ENCODE measurements at regions of chr12 and their contacts with region 1.

Region 1: GRCh38 chr12:53344824-53345485 is 8.8 kb upstream of the SP7 start:
- DNase-seq: peak; percentile 84
- CTCF ChIP-seq: peak; percentile 76

Region 2: GRCh38 chr12:53268648-53269562 is 76.0 kb before region 1 on chr12:
- CTCF ChIA-PET with region 1: no interaction called
- POLR2A ChIA-PET with region 1: no interaction called
- DNase-seq: no peak
- CTCF ChIP-seq: no peak

Region 3: DNA sequence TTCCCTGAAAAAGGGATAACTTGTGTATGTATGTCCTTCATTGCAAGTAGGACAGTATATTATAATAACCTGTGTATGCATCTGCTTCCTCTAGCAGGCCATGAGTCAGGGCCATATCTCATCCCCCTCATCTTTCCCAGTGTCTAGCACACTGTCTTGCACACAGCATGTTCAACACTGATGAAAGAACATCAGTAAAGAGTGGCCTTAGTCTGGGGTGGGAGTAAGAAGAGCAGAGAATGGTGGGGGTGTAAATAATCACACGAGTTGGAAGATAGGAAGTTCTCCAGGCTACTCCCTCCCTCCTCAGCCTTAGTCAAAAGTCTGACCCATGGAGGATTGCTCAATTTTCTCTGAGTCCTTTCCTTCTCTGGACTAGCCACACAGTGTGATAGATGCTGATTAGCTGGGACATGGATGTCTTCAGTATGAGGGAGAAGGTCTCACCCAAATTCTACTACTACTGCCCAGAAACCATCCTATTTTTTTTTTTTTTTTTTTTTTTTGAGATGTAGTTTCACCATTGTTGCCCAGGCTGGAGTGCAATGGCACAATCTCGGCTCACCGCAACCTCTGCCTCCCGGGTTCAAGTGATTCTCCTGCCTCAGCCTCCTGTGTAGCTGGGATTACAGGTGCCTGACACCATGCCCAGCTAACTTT is 20.4 kb after region 1 on chr12:
- CTCF ChIA-PET with region 1: interaction called, 10 read pairs
- POLR2A ChIA-PET with region 1: no interaction called
- DNase-seq: no peak
- CTCF ChIP-seq: no peak

Region 4: GRCh38 chr12:53379389-53380103 is 34.6 kb after region 1 on chr12:
- CTCF ChIA-PET with region 1: interaction called, 15 read pairs
- POLR2A ChIA-PET with region 1: interaction called, 3 read pairs
- DNase-seq: peak; percentile 88
- CTCF ChIP-seq: no peak

Region 5: DNA sequence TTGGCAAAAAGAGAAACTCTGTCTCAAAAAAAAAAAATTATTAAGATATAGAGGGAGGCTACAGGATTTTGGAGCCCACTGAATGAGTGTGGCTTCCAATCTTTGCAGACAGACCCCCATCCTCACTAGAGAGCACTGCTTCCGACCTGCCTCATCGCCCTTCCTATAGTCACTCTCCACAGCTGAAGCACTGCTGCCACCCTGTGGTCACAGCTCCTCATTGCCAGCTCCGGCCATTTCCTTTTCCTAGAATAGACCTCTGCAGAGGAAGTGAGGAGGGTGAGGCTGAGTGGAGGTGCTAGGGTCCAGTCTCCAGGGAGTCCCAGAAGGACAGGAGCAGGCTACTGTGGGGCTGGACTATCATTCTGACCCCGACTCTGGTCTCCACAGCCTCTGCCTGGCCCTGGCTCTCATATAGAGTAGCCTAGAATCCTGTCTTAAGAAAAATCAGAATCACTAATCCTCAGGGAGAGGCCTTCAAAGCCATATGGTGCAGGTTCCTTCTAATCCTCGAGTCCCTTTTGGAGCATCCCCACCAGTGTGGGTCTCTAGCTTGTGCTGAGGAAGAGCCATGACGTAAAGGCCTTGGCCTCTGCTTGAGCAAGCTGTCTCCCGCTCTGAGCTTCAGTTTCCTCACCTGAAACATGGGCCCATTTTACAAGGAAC is 163.7 kb after region 1 on chr12:
- CTCF ChIA-PET with region 1: interaction called, 29 read pairs
- POLR2A ChIA-PET with region 1: no interaction called
- DNase-seq: peak; percentile 82
- CTCF ChIP-seq: peak; percentile 99

Region 6: DNA sequence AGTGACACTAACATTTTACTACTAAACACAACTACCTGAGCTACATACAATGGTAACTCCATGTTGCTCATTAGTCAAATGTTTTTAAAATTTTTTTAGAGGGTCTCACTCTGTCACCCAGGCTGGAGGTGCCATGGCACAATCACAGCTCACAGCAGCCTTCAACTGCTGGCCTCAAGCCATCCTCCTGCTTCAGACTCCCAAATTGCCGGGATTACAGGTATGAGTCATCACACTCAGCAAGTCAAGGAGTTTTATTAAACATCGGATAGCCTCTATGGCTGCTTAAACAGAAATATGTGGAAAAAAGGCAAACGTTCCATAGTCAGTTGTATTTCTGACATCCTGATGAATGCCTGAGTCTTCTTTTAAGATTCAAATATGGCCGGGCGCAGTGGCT is 173.4 kb after region 1 on chr12:
- CTCF ChIA-PET with region 1: interaction called, 21 read pairs
- POLR2A ChIA-PET with region 1: no interaction called
- DNase-seq: no peak
- CTCF ChIP-seq: no peak

Region 7: GRCh38 chr12:53585448-53586125 is 240.6 kb after region 1 on chr12:
- CTCF ChIA-PET with region 1: no interaction called
- POLR2A ChIA-PET with region 1: no interaction called
- DNase-seq: peak; percentile 42
- CTCF ChIP-seq: no peak